ENCODE measurements at regions of chr15 and their contacts with region 1.

Region 1: GRCh38 chr15:62389885-62390790 is 225.1 kb upstream of the C2CD4B start:
- DNase-seq: peak; percentile 70
- ATAC-seq: peak; percentile 63
- H3K4me3 ChIP-seq: peak within 1 kb of the TSS; percentile 99
- H3K27ac ChIP-seq: peak within 1 kb of the TSS; percentile 29; the same call in 1 of the 2 replicates
- H3K4me1 ChIP-seq: peaks cover 16% of the 10 kb centered on the region
- H3K27me3 ChIP-seq: no peaks in the 10 kb centered on the region
- CTCF ChIP-seq: no peak

Region 2: GRCh38 chr15:62269504-62269903 is 120.6 kb before region 1 on chr15:
- CTCF ChIA-PET with region 1: no interaction called
- POLR2A ChIA-PET with region 1: no interaction called
- intact Hi-C with region 1: no loop called
- DNase-seq: no peak
- ATAC-seq: no peak
- H3K4me3 ChIP-seq: no peak overlapping the region
- H3K27ac ChIP-seq: no peak overlapping the region
- H3K4me1 ChIP-seq: no peaks in the 10 kb centered on the region
- H3K27me3 ChIP-seq: no peaks in the 10 kb centered on the region
- CTCF ChIP-seq: no peak

Region 3: DNA sequence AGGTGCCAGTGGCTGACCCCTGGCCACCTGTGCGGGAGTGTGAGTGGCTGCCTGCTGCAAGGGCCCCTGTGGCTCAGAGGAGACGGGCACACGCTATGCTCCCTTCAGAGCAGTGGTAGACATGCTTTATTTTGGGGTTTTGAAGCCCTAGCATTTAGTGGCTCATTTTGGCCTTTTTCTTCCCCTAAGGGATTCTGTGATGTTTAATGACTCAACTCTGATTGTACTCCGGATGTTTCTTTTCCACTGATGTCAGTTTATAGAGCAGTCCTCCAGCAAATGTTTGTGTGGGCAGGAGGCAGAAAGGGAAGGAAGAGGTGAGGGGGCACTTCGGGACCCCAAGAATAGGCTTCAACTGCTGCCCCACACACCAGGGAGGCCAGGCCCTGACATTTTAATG is 63.8 kb after region 1 on chr15:
- CTCF ChIA-PET with region 1: no interaction called
- POLR2A ChIA-PET with region 1: no interaction called
- intact Hi-C with region 1: loop called (anchors 5 kb)
- DNase-seq: peak; percentile 71
- ATAC-seq: peak; percentile 62
- H3K4me3 ChIP-seq: peak overlapping the region; percentile 53
- H3K27ac ChIP-seq: peak overlapping the region; percentile 82
- H3K4me1 ChIP-seq: peaks cover 38% of the 10 kb centered on the region
- H3K27me3 ChIP-seq: no peaks in the 10 kb centered on the region
- CTCF ChIP-seq: no peak

Region 4: DNA sequence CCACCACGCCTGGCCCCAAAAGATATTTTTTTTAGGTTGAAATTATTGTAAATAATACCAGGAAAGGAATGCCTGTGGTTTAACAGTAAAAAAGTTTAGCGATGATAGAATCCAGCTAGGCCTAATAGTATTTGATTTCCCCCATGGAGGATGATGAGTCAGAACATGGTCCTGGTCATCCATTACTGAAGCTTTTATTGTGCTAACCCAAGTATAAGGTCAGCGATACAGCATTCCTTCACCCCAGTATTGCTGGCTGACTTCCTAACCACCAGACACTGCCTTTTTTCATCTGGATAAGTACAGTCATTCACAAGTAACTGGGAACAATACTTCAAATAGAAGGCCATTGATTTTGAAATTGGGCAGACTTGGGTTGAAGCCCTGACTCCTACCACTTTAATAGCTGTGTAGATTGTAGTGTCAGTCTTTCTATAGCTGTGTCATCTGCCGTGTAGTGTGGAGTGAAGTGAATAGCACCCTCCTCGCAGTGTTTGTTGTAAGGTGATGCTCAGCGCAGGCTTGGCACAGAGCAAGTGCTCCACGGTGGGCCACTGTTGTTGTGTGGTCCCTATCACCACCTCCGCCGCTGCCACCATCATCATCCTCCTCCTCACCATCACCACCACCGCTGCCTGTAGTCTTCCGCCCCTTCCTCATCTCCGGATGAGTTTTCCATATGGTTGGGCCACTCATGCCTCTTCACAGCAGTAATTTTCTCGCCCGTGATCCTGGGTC is 216.4 kb after region 1 on chr15:
- CTCF ChIA-PET with region 1: no interaction called
- POLR2A ChIA-PET with region 1: no interaction called
- intact Hi-C with region 1: loop called (anchors 2 kb)
- DNase-seq: peak; percentile 94
- ATAC-seq: peak; percentile 89
- H3K4me3 ChIP-seq: no peak overlapping the region
- H3K27ac ChIP-seq: peak overlapping the region; percentile 62
- H3K4me1 ChIP-seq: peaks cover 52% of the 10 kb centered on the region
- H3K27me3 ChIP-seq: no peaks in the 10 kb centered on the region
- CTCF ChIP-seq: no peak

Region 5: GRCh38 chr15:62649793-62650420 is 259.8 kb after region 1 on chr15:
- CTCF ChIA-PET with region 1: no interaction called
- POLR2A ChIA-PET with region 1: no interaction called
- intact Hi-C with region 1: loop called (anchors 1 kb)
- DNase-seq: no peak
- ATAC-seq: no peak
- H3K4me3 ChIP-seq: no peak overlapping the region
- H3K27ac ChIP-seq: no peak overlapping the region
- H3K4me1 ChIP-seq: peaks cover 17% of the 10 kb centered on the region
- H3K27me3 ChIP-seq: no peaks in the 10 kb centered on the region
- CTCF ChIP-seq: no peak

Region 6: GRCh38 chr15:62706317-62706716 is 316.2 kb after region 1 on chr15:
- CTCF ChIA-PET with region 1: no interaction called
- POLR2A ChIA-PET with region 1: no interaction called
- intact Hi-C with region 1: loop called (anchors 10 kb)
- DNase-seq: peak; percentile 6
- ATAC-seq: no peak
- H3K4me3 ChIP-seq: no peak overlapping the region
- H3K27ac ChIP-seq: no peak overlapping the region
- H3K4me1 ChIP-seq: no peaks in the 10 kb centered on the region
- H3K27me3 ChIP-seq: no peaks in the 10 kb centered on the region
- CTCF ChIP-seq: peak; percentile 38